ENCODE measurements at regions of chr15 and their contacts with region 1.

Region 1: DNA sequence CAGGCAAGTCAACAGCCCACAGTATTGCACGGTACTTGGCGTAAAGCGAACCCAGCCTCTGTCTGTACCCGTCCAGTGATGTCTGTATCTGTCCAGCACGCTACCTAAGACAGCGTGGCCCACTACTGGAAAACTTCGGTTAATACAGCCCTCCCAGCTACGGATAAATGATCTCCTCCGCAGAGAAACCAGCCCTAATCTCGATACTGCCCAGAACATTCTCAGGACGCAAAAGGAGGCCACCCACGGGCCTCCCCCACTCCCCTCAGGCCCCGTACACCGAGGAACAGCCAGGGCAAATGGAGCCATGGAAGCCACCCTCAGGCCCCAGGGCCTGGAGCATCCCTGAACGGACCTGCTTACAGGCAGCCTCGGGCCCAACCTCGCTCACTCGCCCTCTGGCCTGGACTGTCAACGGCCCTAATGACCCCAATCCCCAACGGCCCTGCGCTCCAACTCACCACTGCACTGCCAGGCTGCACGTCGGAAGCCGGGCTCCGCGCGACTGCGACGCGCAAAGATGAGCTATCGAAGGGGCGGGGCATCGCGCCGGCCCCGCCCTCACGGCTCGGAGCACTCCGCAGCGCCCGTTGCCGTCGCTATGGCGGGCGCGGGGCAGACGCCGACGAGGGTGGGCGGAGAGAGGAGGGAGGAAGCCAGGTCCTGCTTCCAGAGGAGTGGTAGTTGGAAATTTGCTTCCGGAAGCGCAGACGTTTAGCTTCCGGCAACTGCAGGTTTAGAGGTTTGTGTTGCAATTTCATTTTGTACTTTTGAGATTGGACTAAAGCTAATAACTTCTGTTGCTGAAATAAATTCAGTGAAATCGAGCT is at the start of gene SKIC8:
- H3K4me3 ChIP-seq: peak within 1 kb of the TSS; percentile 87
- H3K27ac ChIP-seq: peak within 1 kb of the TSS; percentile 63
- H3K4me1 ChIP-seq: no peaks in the 10 kb centered on the region
- CTCF ChIP-seq: peak; percentile 56; the same call in 1 of the 2 replicates

Region 2: GRCh38 chr15:77921664-77922063 is 377.7 kb before region 1 on chr15:
- CTCF ChIA-PET with region 1: no interaction called
- POLR2A ChIA-PET with region 1: no interaction called
- H3K4me3 ChIP-seq: no peak overlapping the region
- H3K27ac ChIP-seq: no peak overlapping the region
- H3K4me1 ChIP-seq: no peaks in the 10 kb centered on the region
- CTCF ChIP-seq: no peak

Region 3: DNA sequence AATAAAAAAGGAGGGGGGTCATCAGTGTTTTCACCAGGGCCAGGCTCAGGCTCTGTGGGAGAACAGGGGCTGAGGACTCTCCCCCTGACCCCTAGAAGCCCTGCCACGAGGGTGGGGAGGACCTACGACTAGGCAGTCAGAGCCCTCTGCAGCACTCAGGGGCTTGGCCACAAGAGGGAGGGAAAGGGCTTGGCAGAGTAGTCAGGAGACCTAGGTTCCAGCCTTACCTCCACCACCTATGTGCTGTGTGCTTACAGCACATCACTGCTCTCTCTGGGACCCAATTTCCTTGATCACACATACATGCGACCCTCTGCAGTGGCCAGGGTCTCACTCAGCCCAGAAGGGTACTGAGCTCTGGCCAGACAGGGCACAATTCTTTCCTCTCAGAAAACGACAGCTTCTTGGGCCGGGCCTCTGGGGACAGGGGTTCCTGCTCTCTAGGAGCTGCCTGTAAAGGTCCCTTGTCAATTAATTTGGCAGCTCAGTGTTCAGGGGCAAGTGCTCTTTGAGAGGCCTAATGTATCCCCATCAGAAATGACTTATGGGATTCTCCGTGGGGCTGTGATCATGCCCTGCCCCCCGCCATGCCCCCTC is 16.5 kb after region 1 on chr15:
- CTCF ChIA-PET with region 1: interaction called, 9 read pairs
- POLR2A ChIA-PET with region 1: interaction called, 14 read pairs
- H3K4me3 ChIP-seq: no peak overlapping the region
- H3K27ac ChIP-seq: no peak overlapping the region
- H3K4me1 ChIP-seq: no peaks in the 10 kb centered on the region
- CTCF ChIP-seq: peak; percentile 57